ENCODE measurements at regions of chr10 and their contacts with region 1.

Region 1: GRCh38 chr10:30694518-30695228 is 65.1 kb upstream of the LYZL2 start:
- DNase-seq: no peak
- ATAC-seq: no peak
- H3K4me3 Mint-ChIP-seq: no peak overlapping the region
- H3K27ac Mint-ChIP-seq: peak overlapping the region in 3 of 10 donors; percentile 24 to 64 (median 25)
- H3K4me1 Mint-ChIP-seq: peaks cover 20 to 42% (median 38%) of the 10 kb centered on the region in 4 donors
- H3K27me3 Mint-ChIP-seq: no peaks in the 10 kb centered on the region

Region 2: DNA sequence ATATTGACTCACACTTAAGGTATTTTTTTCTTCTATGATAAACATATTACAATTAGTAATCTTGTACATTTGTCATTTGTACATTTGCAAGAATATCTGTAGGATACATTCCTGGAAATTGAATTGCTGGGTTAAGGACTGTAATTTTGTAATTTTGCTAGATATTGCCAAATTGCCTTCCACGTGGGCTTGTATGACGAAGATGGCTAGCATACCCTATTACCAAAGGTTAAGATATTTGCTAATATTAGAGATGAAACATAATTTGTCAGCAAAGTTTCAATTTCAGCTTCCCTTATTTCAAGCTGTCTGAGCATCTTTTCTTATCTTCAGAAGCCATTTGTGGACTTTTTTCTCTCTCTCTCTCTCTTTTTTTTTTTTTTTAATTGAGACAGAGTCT is 64.1 kb before region 1 on chr10:
- POLR2A ChIA-PET with region 1: no interaction called
- DNase-seq: no peak
- ATAC-seq: no peak
- H3K4me3 Mint-ChIP-seq: no peak overlapping the region
- H3K27ac Mint-ChIP-seq: no peak overlapping the region
- H3K4me1 Mint-ChIP-seq: no peaks in the 10 kb centered on the region
- H3K27me3 Mint-ChIP-seq: peaks cover 8 to 23% (median 17%) of the 10 kb centered on the region in 5 donors

Region 3: GRCh38 chr10:30705101-30705624 is 10.5 kb after region 1 on chr10:
- POLR2A ChIA-PET with region 1: interaction called, 11 read pairs
- DNase-seq: peak in 6 of 10 donors; percentile 16 to 62 (median 54)
- ATAC-seq: peak; percentile 24 to 32
- H3K4me3 Mint-ChIP-seq: peak overlapping the region; percentile 88 to 93 (median 92)
- H3K27ac Mint-ChIP-seq: peak overlapping the region; percentile 96 to 99 (median 98)
- H3K4me1 Mint-ChIP-seq: peaks cover 20 to 62% (median 60%) of the 10 kb centered on the region in 4 donors
- H3K27me3 Mint-ChIP-seq: peaks cover 0 to under 1% (median 0%) of the 10 kb centered on the region in 5 donors

Region 4: GRCh38 chr10:30882281-30882680 is 187.6 kb after region 1 on chr10:
- POLR2A ChIA-PET with region 1: no interaction called
- DNase-seq: no peak
- ATAC-seq: no peak
- H3K4me3 Mint-ChIP-seq: no peak overlapping the region
- H3K27ac Mint-ChIP-seq: no peak overlapping the region
- H3K4me1 Mint-ChIP-seq: peaks cover 0 to 2% (median 0%) of the 10 kb centered on the region in 4 donors
- H3K27me3 Mint-ChIP-seq: no peaks in the 10 kb centered on the region

Measured in naive thymus-derived CD8-positive, alpha-beta T cell (primary cell).